ENCODE measurements at regions of chr13 and their contacts with region 1.

Region 1: DNA sequence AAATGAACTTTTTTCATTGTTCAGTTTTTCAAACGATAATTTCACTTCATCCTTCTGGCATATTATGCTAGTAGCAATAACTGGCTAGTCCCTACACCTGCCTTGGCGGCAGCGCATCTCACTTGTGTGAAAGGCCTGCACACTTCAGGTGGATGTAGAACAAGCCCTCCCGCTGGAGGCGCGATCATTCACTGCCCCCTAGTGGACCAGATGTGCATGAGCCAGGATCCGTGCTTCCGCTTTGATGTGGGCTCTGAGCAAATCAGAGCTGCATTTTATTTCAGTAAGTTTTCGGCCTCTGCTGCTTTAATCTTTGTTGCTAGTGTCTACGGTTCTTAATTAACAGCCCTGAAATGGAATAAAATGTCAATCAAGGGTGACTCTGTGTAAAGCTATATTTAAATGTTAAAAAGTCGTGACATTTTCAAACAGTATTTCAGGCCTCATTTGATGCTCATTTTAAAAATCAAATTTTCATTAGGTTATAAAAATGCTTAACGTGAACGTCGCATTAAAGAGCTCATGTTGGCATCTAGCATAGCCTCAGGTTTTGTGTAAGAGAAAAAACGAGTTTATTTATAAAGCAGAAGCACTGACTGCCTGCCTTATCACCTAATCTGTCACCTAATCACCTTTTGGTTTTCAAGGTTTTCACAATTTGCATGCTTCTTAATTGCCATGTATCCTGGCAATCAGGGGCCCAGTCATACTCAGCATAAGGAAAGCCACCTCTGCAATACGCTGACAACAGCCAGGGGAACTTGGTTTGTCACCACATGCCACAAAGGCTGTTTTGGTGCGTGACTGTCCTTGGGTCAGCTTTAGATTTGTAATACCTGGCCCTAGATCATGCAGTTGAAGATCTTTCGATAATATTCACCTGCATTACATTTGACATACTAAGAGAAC is 112.2 kb downstream of the TEX26 start:
- DNase-seq: peak; percentile 91
- ATAC-seq: peak; percentile 69
- H3K4me3 Mint-ChIP-seq: peak overlapping the region; percentile 28
- H3K27ac Mint-ChIP-seq: peak overlapping the region; percentile 89
- H3K4me1 Mint-ChIP-seq: peaks cover 46% of the 10 kb centered on the region
- H3K27me3 Mint-ChIP-seq: peaks cover 6% of the 10 kb centered on the region

Region 2: GRCh38 chr13:29595380-29596063 is 1449.1 kb before region 1 on chr13 and contains the start of gene SLC7A1:
- CTCF ChIA-PET with region 1: no interaction called
- POLR2A ChIA-PET with region 1: no interaction called
- intact Hi-C with region 1: loop called in 1 of 2 experiments (anchors 10 kb)
- DNase-seq: peak; percentile 92
- ATAC-seq: peak; percentile 88
- H3K4me3 Mint-ChIP-seq: peak within 1 kb of the TSS; percentile 90
- H3K27ac Mint-ChIP-seq: peak within 1 kb of the TSS; percentile 95
- H3K4me1 Mint-ChIP-seq: peaks cover 36% of the 10 kb centered on the region
- H3K27me3 Mint-ChIP-seq: no peaks in the 10 kb centered on the region
- total RNA-seq, gene SLC7A1: 91.1 to 126 TPM

Region 3: GRCh38 chr13:30617315-30618185 is 427.1 kb before region 1 on chr13 and contains the start of gene USPL1:
- CTCF ChIA-PET with region 1: interaction called, 3 read pairs
- POLR2A ChIA-PET with region 1: no interaction called
- intact Hi-C with region 1: loop called (anchors 1 to 2 kb)
- DNase-seq: peak; percentile 99
- ATAC-seq: peak; percentile 92
- H3K4me3 Mint-ChIP-seq: no peak within 1 kb of the TSS
- H3K27ac Mint-ChIP-seq: no peak within 1 kb of the TSS
- H3K4me1 Mint-ChIP-seq: peaks cover 31% of the 10 kb centered on the region
- H3K27me3 Mint-ChIP-seq: no peaks in the 10 kb centered on the region
- total RNA-seq, gene USPL1: 14.8 to 16.9 TPM

Region 4: DNA sequence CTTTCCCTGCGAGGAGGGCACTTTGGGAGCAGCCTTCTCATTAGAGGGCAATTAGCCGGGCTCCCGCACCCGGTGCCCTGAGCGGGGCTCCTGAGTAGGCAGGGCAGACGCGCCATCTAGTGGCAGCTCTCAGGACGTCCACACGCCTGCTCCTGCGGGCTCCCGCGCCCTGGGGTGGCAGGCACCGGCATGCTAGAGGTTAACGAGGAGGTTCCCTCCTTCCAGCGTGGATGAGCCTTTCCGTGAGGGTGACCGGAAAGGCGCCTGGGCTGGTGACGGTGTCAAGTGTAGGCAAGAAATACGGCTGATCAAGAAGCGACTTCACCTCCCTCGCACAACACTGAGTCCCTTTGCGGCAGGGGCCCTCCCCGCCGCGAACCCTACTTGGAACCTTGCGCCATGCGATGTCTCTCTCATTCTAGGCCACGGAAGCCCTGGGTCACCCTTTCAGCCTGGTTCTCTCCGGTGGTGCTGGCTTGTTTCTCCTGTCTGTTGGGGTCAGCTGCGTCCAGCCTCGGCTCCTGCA is 241.6 kb before region 1 on chr13:
- CTCF ChIA-PET with region 1: interaction called, 6 read pairs
- POLR2A ChIA-PET with region 1: no interaction called
- intact Hi-C with region 1: loop called (anchors 2 to 5 kb)
- DNase-seq: peak; percentile 91
- ATAC-seq: peak; percentile 99
- H3K4me3 Mint-ChIP-seq: no peak overlapping the region
- H3K27ac Mint-ChIP-seq: no peak overlapping the region
- H3K4me1 Mint-ChIP-seq: peaks cover 4% of the 10 kb centered on the region
- H3K27me3 Mint-ChIP-seq: no peaks in the 10 kb centered on the region

Region 5: DNA sequence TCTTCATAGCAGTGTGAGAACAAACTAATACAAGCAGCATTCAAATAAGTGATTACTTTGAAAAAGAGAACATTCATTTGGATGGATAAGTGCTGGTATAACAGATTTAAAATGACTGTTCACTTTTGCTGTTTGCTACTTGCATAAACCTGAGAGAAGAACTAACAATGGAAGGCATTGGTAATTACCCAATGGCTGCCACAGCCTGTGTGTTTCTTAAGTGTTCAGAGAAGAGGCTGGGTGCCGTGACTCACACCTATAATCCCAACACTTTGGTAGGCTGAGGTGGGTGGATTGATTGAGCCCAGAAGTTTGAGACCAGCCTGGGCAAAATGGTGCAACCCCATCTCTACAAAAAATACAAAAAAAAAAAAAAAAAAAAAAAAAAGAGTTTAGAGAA is 117.0 kb before region 1 on chr13:
- CTCF ChIA-PET with region 1: interaction called, 4 read pairs
- POLR2A ChIA-PET with region 1: no interaction called
- intact Hi-C with region 1: loop called (anchors 1 to 5 kb)
- DNase-seq: peak; percentile 25
- ATAC-seq: peak; percentile 80
- H3K4me3 Mint-ChIP-seq: no peak overlapping the region
- H3K27ac Mint-ChIP-seq: no peak overlapping the region
- H3K4me1 Mint-ChIP-seq: peaks cover 18% of the 10 kb centered on the region
- H3K27me3 Mint-ChIP-seq: peaks cover 38% of the 10 kb centered on the region

Region 6: GRCh38 chr13:31134039-31134711 is 89.5 kb after region 1 on chr13:
- CTCF ChIA-PET with region 1: interaction called, 3 read pairs
- POLR2A ChIA-PET with region 1: no interaction called
- intact Hi-C with region 1: loop called (anchors 1 to 2 kb)
- DNase-seq: peak; percentile 16
- ATAC-seq: peak; percentile 72
- H3K4me3 Mint-ChIP-seq: no peak overlapping the region
- H3K27ac Mint-ChIP-seq: peak overlapping the region; percentile 81
- H3K4me1 Mint-ChIP-seq: peaks cover 53% of the 10 kb centered on the region
- H3K27me3 Mint-ChIP-seq: no peaks in the 10 kb centered on the region

Measured in activated CD4-positive, alpha-beta T cell treated with anti-CD3 and anti-CD28 coated beads for 36 hours (primary cell).